ENCODE measurements at regions of chr6 and their contacts with region 1.

Region 1: GRCh38 chr6:117449549-117450439 is 24.1 kb upstream of the ROS1 start:
- DNase-seq: peak; percentile 84
- H3K4me3 ChIP-seq: no peak overlapping the region
- H3K27ac ChIP-seq: no peak overlapping the region
- H3K4me1 ChIP-seq: peaks cover 6% of the 10 kb centered on the region
- H3K27me3 ChIP-seq: peaks cover 15 to 30% of the 10 kb centered on the region in 2 experiments
- CTCF ChIP-seq: peak; percentile 41 to 48
- POLR2A ChIP-seq: no peak

Region 2: GRCh38 chr6:117482240-117483003 is 32.6 kb after region 1 on chr6 and contains the start of gene DCBLD1:
- CTCF ChIA-PET with region 1: interaction called, 47 read pairs
- POLR2A ChIA-PET with region 1: no interaction called
- dilution Hi-C with region 1: no loop called
- intact Hi-C with region 1: loop called (anchors 1 kb)
- DNase-seq: peak; percentile 78
- H3K4me3 ChIP-seq: peak within 1 kb of the TSS; percentile 53 to 94 (median 92)
- H3K27ac ChIP-seq: peak within 1 kb of the TSS; percentile 92
- H3K4me1 ChIP-seq: peaks cover 28% of the 10 kb centered on the region
- H3K27me3 ChIP-seq: no peaks in the 10 kb centered on the region
- CTCF ChIP-seq: peak in 1 of 2 donors; percentile 12
- POLR2A ChIP-seq: peak; percentile 78
- total RNA-seq, gene DCBLD1: 44.3 and 55.8 TPM in 2 replicates

Region 3: DNA sequence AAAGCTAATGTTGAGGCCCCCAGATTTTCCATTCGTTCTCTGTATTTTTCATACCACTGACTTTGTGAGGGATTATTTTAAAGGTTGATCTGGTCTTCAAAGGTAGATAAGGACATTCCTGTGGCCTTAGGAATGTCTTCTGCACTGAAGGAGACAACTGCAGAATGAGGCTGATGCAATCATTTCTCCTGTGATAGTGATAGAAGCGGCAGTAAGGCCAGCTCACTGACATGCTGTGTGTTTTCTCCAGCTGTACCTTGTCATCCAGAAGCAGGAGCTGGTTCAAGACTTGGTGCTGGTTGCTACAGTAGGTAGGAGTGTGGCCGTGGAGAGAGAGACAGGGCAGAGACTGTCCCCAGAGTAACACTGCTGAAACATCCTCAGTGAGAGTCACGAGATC is 86.5 kb after region 1 on chr6:
- CTCF ChIA-PET with region 1: interaction called, 10 read pairs
- POLR2A ChIA-PET with region 1: no interaction called
- dilution Hi-C with region 1: no loop called
- intact Hi-C with region 1: no loop called
- DNase-seq: no peak
- H3K4me3 ChIP-seq: no peak overlapping the region
- H3K27ac ChIP-seq: no peak overlapping the region
- H3K4me1 ChIP-seq: peaks cover 17% of the 10 kb centered on the region
- H3K27me3 ChIP-seq: no peaks in the 10 kb centered on the region
- CTCF ChIP-seq: no peak
- POLR2A ChIP-seq: no peak

Region 4: GRCh38 chr6:117568831-117569410 is 119.1 kb after region 1 on chr6:
- CTCF ChIA-PET with region 1: interaction called, 21 read pairs
- POLR2A ChIA-PET with region 1: no interaction called
- dilution Hi-C with region 1: no loop called
- intact Hi-C with region 1: no loop called
- DNase-seq: no peak
- H3K4me3 ChIP-seq: no peak overlapping the region
- H3K27ac ChIP-seq: no peak overlapping the region
- H3K4me1 ChIP-seq: no peaks in the 10 kb centered on the region
- H3K27me3 ChIP-seq: no peaks in the 10 kb centered on the region
- CTCF ChIP-seq: no peak
- POLR2A ChIP-seq: no peak